ENCODE measurements at regions of chr6 and their contacts with region 1.

Region 1: GRCh38 chr6:27146706-27147505 is 100.6 kb upstream of the PRSS16 start:
- DNase-seq: peak; percentile 99
- H3K4me3 ChIP-seq: peak overlapping the region; percentile 44 to 79 (median 73)
- H3K27ac ChIP-seq: peak overlapping the region; percentile 79
- H3K4me1 ChIP-seq: peaks cover 5% of the 10 kb centered on the region
- H3K27me3 ChIP-seq: no peaks in the 10 kb centered on the region
- CTCF ChIP-seq: no peak

Region 2: GRCh38 chr6:26045065-26045927 is 1101.6 kb before region 1 on chr6:
- CTCF ChIA-PET with region 1: no interaction called
- dilution Hi-C with region 1: no loop called
- in situ Hi-C with region 1: loop called in 1 of 2 experiments (anchors 25 kb)
- intact Hi-C with region 1: loop called (anchors 5 kb)
- DNase-seq: peak; percentile 93
- H3K4me3 ChIP-seq: peak overlapping the region; percentile 37 to 64 (median 44)
- H3K27ac ChIP-seq: peak overlapping the region; percentile 79
- H3K4me1 ChIP-seq: peaks cover 27% of the 10 kb centered on the region
- H3K27me3 ChIP-seq: no peaks in the 10 kb centered on the region
- CTCF ChIP-seq: peak; percentile 22 to 36